Activated CD4-positive, alpha-beta memory T cell treated with anti-CD3 and anti-CD28 coated beads, Interleukin-2, amount 10 ng/mL, durations not matched to agents 7 days and 5 days (primary cell): ENCODE measurements at regions of chr17 and their contacts with region 1.

Region 1: GRCh38 chr17:35930211-35931065 is at the start of gene RDM1:
- DNase-seq: peak; percentile 93
- H3K4me3 Mint-ChIP-seq: peak within 1 kb of the TSS; percentile 84
- H3K27ac Mint-ChIP-seq: peak within 1 kb of the TSS; percentile 74
- H3K4me1 Mint-ChIP-seq: peaks cover 32% of the 10 kb centered on the region
- H3K27me3 Mint-ChIP-seq: peaks cover 7% of the 10 kb centered on the region
- total RNA-seq, gene RDM1: 14.4 to 16.9 TPM

Region 2: DNA sequence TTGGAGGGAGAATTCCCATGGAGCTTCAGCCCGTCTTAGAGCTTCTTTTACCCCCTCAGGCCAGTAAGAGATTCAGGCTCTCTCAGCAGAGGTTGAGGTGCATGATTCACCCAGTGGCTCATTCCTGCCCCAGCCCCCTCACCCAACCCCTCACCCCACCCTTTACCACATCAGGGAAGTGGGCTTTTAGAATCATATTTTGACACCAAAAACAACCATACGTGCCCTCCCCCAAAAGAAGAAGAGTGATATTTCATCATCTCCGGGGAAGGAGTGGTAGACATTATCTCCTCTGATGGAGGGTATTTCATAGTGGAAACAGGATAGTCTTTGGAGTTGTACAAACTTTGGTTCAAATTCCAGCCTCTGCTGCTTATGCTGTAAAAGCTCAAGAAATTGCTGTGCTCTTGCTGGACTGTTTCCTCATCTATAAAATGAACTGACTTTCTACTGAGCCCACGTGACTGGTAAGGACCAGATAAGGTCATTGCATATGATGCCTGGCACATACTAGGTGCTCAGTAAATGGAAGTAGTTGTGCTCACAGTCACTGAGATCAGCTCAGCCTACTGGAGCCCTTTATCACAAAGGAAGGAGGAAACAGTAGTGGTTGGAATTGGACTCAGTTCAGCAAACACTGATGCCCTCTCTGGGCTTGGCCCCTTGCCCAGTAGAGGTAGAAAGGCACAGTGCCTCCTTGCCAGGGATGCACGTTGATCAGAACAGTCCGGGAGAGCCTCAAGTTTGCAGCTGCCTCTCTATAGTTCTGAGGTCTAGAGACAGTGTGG is 32.0 kb before region 1 on chr17:
- CTCF ChIA-PET with region 1: no interaction called
- POLR2A ChIA-PET with region 1: interaction called, 13 read pairs
- DNase-seq: peak; percentile 68
- H3K4me3 Mint-ChIP-seq: peak overlapping the region; percentile 47
- H3K27ac Mint-ChIP-seq: peak overlapping the region; percentile 85
- H3K4me1 Mint-ChIP-seq: peaks cover 78% of the 10 kb centered on the region
- H3K27me3 Mint-ChIP-seq: no peaks in the 10 kb centered on the region

Region 3: DNA sequence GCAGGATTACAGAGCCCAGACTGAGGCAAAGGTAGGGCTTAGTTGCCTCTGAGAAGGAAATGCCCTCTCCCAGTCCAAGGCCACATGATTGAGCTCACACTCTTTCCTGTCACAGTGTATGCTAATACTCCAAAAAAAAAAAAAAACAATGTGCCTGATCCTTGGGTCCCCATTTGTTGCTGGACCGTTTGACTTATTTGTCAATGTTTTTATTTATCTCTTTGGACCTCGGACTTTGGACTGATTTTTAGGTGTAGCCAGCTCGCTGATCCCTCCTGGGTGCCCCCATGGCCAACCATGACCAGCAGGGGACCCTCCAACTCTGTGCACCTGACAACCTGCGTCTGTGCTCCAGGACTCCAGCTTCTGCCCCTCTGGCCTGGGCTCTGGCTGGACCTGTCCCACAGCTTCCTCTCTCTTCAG is 51.5 kb after region 1 on chr17:
- CTCF ChIA-PET with region 1: no interaction called
- POLR2A ChIA-PET with region 1: no interaction called
- DNase-seq: no peak
- H3K4me3 Mint-ChIP-seq: no peak overlapping the region
- H3K27ac Mint-ChIP-seq: no peak overlapping the region
- H3K4me1 Mint-ChIP-seq: no peaks in the 10 kb centered on the region
- H3K27me3 Mint-ChIP-seq: no peaks in the 10 kb centered on the region